Activated CD4-positive, alpha-beta memory T cell treated with anti-CD3 and anti-CD28 coated beads for 36 hours (primary cell): ENCODE measurements at regions of chr1 and their contacts with region 1.

Region 1: GRCh38 chr1:147494998-147495580 is 46.2 kb upstream of the BCL9 start:
- DNase-seq: peak; percentile 76
- H3K4me3 Mint-ChIP-seq: no peak overlapping the region
- H3K27ac Mint-ChIP-seq: no peak overlapping the region
- H3K4me1 Mint-ChIP-seq: no peaks in the 10 kb centered on the region
- H3K27me3 Mint-ChIP-seq: no peaks in the 10 kb centered on the region

Region 2: GRCh38 chr1:147527941-147528936 is 33.1 kb after region 1 on chr1:
- CTCF ChIA-PET with region 1: no interaction called
- POLR2A ChIA-PET with region 1: no interaction called
- intact Hi-C with region 1: no loop called
- DNase-seq: peak; percentile 42
- H3K4me3 Mint-ChIP-seq: no peak overlapping the region
- H3K27ac Mint-ChIP-seq: no peak overlapping the region
- H3K4me1 Mint-ChIP-seq: no peaks in the 10 kb centered on the region
- H3K27me3 Mint-ChIP-seq: no peaks in the 10 kb centered on the region

Region 3: GRCh38 chr1:147565189-147565980 is 70.3 kb after region 1 on chr1:
- CTCF ChIA-PET with region 1: no interaction called
- POLR2A ChIA-PET with region 1: no interaction called
- intact Hi-C with region 1: no loop called
- DNase-seq: no peak
- H3K4me3 Mint-ChIP-seq: no peak overlapping the region
- H3K27ac Mint-ChIP-seq: no peak overlapping the region
- H3K4me1 Mint-ChIP-seq: peaks cover 12% of the 10 kb centered on the region
- H3K27me3 Mint-ChIP-seq: no peaks in the 10 kb centered on the region

Region 4: DNA sequence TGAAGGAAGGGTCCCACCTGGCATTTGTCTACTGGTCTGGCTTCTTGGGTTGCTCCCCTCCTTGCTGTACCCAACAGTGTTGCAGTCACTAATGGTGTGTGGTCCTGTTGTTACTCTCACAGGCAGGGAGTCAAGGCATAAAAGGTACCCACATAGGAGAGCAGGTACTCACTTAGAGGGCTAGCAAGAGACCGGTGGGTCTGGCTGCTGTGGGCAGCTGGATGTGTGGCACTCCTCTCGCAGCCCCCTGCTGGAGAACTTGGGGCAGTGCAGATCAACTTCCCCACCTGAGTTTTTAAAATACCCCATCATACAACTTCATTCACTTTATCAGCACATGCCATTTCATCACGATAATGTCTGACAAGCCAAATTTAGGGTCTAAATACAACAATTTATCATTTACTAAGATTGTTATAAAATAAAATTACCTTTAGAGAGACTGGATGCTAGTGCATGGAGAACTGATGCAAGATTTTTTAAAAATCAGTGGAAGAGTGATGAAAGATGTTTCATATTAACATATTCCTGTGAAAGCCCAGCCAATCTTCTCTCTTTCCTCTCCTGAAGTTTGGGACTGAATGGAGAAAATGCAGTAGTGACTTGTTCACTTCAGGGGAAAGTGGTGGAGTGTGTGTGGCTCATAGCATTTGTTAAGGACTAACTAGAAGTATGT is 132.5 kb after region 1 on chr1:
- CTCF ChIA-PET with region 1: interaction called, 20 read pairs
- POLR2A ChIA-PET with region 1: no interaction called
- intact Hi-C with region 1: loop called (anchors 1 kb)
- DNase-seq: peak; percentile 57
- H3K4me3 Mint-ChIP-seq: no peak overlapping the region
- H3K27ac Mint-ChIP-seq: no peak overlapping the region
- H3K4me1 Mint-ChIP-seq: peaks cover 24% of the 10 kb centered on the region
- H3K27me3 Mint-ChIP-seq: no peaks in the 10 kb centered on the region

Region 5: DNA sequence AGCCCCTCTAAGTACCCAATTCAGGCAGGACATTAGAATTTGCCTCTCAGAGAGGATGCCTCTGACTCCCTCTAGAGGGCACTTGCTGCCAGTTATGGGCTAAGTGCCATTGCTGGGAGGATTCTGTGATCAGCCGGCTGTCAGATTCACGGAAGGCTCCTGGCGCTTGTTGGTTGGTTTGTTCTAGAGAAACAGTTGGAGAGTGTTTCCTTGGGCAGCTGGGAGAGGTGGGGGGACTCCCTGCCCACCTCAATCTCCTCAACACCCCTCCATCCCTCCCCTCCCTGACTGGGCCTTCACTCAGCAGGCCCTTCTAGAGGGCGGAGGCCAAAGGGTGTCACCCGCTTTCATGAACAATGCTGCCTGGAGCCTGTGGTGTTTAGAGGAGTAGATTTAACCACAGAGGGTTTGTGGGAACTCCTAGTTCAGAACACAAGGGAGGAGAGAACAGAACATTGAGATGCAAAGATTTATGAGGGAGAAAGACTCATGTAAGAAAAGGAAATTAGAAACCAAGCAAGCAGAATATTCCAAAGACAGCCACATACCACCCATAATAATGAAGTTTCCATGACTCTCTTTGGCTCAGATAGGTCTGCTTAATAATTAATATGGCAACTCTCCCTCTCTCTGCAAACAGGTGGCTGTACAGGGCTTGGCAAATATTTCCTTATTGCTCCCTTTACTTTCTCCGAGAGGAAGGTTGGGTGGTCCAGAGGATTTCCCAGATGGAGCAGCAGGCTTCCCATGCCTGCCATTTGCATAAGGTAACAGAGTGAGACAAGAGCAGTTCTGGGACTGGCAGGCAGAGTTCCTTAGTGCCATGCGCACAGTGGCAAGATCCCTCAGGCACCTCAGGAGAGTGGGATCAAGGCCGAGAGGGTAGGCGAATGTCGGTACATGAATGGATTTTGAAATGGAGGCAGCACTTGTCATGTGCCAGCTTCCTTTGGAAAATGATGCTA is 205.2 kb after region 1 on chr1:
- CTCF ChIA-PET with region 1: interaction called, 5 read pairs
- POLR2A ChIA-PET with region 1: no interaction called
- intact Hi-C with region 1: loop called (anchors 2 kb)
- DNase-seq: peak; percentile 69
- H3K4me3 Mint-ChIP-seq: no peak overlapping the region
- H3K27ac Mint-ChIP-seq: peak overlapping the region; percentile 0
- H3K4me1 Mint-ChIP-seq: peaks cover 7% of the 10 kb centered on the region
- H3K27me3 Mint-ChIP-seq: peaks cover 4% of the 10 kb centered on the region